ENCODE measurements at regions of chr17 and their contacts with region 1.

Region 1: DNA sequence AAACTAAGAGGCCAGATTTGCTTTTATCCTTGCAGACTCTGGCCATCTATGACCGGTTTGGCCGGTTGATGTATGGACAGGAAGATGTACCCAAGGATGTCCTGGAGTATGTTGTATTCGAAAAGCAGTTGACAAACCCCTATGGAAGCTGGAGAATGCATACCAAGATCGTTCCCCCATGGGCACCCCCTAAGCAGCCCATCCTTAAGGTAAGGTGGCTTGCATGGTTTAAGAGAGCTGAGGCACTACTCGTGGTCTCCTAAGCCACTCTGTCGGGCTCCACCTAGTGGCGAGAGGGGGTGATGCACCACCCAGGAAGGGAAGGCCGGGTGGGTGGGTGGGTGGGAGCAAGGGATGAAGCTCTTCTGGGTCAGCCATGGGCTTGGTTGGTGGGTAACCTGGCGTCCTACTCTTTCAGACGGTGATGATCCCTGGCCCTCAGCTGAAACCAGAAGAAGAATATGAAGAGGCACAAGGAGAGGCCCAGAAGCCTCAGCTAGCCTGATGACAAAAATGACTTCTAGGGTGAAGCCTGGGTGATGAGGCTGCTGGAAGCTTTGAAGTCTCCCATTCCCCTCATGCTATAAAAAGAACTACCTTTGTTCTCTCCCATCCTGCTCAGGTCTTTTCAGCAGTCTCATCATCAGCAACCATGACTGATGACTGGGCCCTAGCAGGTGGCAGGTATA is 21.5 kb downstream of the GPR179 start:
- DNase-seq: peak; percentile 80
- ATAC-seq: peak; percentile 81
- H3K4me3 Mint-ChIP-seq: no peak overlapping the region
- H3K27ac Mint-ChIP-seq: no peak overlapping the region
- H3K4me1 Mint-ChIP-seq: peaks cover 10% of the 10 kb centered on the region
- H3K27me3 Mint-ChIP-seq: no peaks in the 10 kb centered on the region

Region 2: DNA sequence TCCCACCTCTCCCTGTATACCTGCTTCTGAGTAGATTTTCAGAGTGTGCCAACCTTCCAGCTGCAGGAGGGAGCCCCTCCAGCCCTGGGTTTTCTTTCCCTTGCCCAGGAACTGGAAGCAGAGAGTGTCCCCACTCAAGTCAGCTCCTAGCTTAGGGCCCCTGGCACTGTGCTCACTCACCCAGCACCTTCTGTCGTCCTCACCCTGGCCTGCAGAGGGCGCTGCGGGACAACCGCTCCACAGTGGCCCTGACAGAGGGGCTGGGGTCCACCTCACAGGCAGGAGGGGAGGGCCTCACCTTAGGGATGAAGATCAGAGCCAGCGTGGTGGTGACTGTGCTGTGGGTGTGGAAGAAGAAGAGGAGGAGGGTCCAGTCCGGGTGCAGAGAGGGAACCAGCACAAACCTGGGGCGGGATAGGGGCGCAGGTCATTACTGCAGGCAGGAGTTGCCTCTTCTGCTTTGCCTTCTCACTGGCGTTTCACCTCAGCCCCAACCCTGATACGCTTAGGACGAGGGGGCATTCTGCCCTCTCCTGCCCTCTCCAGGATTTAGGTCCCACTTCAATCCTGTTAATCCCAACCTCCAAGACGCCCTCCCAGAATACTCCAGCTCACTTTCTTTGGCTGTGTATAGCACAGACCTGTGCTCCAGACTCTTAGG is 11.5 kb after region 1 on chr17:
- CTCF ChIA-PET with region 1: interaction called, 13 read pairs
- POLR2A ChIA-PET with region 1: no interaction called
- DNase-seq: peak; percentile 66
- ATAC-seq: peak; percentile 71
- H3K4me3 Mint-ChIP-seq: no peak overlapping the region
- H3K27ac Mint-ChIP-seq: no peak overlapping the region
- H3K4me1 Mint-ChIP-seq: no peaks in the 10 kb centered on the region
- H3K27me3 Mint-ChIP-seq: no peaks in the 10 kb centered on the region